Heart right ventricle (tissue), 16 donors: ENCODE measurements at regions of chr22 and their contacts with region 1.

Region 1: DNA sequence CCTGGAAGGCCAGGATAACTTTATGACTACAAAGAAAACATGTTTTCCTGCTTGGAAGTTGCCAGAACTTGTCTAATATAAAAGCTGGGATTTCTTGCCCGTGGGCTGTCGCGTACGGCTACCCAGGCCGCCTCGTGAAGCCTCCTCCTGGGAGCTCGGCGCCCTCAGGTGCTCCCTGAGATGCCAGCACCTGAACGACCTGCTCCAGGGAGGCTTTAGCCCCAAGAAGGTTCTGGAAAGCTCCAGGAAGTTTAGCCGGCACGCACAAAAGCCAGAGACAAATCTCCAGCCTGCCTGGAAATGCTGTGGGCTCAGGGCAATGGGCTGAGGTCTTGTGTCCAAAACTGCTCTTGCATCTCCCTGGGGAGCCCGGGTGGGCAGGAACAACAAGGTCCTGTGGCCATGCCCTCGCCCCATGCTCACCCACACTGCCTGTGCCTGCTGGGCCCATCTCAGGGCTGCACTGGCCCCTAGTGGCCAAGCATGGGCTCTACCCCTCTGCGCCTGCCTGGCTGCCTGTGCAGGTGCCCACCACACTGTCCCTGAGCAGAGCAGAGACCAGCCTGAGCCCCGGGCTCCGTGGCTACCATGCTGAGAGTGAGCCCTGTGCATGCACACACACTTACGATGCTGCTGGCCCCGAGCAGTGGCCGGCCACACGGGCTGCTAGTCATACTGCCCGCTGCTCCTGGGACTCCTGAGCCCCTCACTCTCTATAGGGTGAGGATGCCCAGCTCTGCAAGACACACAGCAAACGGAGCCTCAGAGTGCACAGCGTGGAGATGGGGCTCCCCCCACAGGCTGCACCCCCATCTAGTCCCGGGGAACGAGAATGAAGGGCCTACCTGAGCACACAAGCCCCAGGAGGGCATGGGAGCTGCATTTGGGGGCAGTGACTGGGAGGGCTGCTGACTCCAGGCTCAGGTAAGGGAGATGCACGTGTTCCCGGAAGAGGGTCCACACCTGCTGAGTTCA is 4.9 kb upstream of the CELSR1 start:
- DNase-seq: peak; percentile 62 to 79
- ATAC-seq: peak; percentile 66 to 83 (median 76)
- H3K4me3 ChIP-seq: no peak overlapping the region
- H3K27ac ChIP-seq: peak overlapping the region in 1 of 10 donors; percentile 15
- H3K4me1 ChIP-seq: peaks cover 0 to 46% (median 31%) of the 10 kb centered on the region in 9 donors
- H3K27me3 ChIP-seq: peaks cover 0 to 48% (median 30%) of the 10 kb centered on the region in 7 donors
- CTCF ChIP-seq: peak; percentile 86 to 97 (median 90)

Region 2: DNA sequence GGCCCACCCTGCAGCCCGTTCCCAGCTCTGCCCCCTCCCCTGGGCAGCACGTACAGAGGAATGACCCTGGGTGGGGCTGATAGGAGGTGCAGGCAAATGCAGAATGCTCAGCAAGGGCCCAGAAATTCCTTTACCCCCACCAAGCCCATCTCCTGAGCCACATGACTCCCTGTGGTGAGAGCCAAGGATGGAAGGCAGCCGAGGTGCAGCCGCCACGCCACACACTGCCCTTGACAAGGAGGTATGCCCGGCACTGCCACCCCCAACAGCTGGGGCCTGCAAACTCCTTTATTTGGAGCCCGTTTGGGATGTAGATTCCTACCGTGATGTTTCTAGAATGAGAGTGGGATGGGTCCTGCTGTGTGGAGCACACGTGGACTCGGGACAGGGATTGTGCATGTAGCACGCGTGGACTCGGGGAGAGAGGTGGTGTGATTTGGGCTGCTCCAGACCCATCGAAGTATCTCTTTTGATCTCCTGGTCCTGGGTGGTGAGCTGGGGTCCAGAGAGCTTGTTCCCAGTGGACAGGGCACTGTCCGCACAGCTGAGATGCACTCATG is 232.7 kb before region 1 on chr22:
- intact Hi-C with region 1: no loop called
- DNase-seq: peak in 1 of 2 donors; percentile 36
- ATAC-seq: peak; percentile 67 to 89 (median 77)
- H3K4me3 ChIP-seq: no peak overlapping the region
- H3K27ac ChIP-seq: peak overlapping the region in 2 of 10 donors; percentile 5 to 28
- H3K4me1 ChIP-seq: peaks cover 0 to 10% (median 0%) of the 10 kb centered on the region in 9 donors
- H3K27me3 ChIP-seq: no peaks in the 10 kb centered on the region
- CTCF ChIP-seq: no peak

Region 3: GRCh38 chr22:46367707-46368191 is 174.5 kb before region 1 on chr22:
- intact Hi-C with region 1: loop called (anchors 1 to 5 kb)
- DNase-seq: peak; percentile 50 to 78
- ATAC-seq: peak; percentile 33 to 76 (median 66)
- H3K4me3 ChIP-seq: no peak overlapping the region
- H3K27ac ChIP-seq: no peak overlapping the region
- H3K4me1 ChIP-seq: no peaks in the 10 kb centered on the region
- H3K27me3 ChIP-seq: peaks cover 0 to 20% (median 6%) of the 10 kb centered on the region in 7 donors
- CTCF ChIP-seq: peak; percentile 71 to 94 (median 86)

Region 4: GRCh38 chr22:46408568-46409506 is 133.5 kb before region 1 on chr22:
- intact Hi-C with region 1: loop called in 1 of 10 experiments (anchors 10 kb)
- DNase-seq: no peak
- ATAC-seq: no peak
- H3K4me3 ChIP-seq: no peak overlapping the region
- H3K27ac ChIP-seq: no peak overlapping the region
- H3K4me1 ChIP-seq: peaks cover 0 to 12% (median 4%) of the 10 kb centered on the region in 9 donors
- H3K27me3 ChIP-seq: peaks cover 0 to 3% (median 0%) of the 10 kb centered on the region in 7 donors
- CTCF ChIP-seq: no peak